ENCODE measurements at regions of chrX and their contacts with region 1.

Region 1: DNA sequence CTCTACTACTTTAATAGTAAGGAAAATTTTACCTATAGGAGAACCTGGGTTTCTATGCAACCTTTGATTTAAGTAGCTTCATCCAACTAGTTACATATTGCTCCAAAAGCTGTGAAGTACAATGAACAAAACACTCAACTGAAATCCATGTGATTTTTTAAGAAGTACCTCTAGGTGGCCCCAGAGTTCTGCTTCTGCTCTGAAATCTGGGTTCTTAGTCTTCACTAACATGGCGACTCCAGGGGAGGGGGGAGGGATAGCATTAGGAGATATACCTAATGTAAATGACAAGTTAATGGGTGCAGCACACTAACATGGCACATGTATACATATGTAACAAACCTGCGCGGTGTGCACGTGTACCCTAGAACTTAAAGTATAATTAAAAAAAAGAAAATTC is 73.4 kb upstream of the MAGEB2 start:
- DNase-seq: no peak
- H3K4me3 ChIP-seq: no peak overlapping the region
- H3K27me3 ChIP-seq: no peaks in the 10 kb centered on the region
- CTCF ChIP-seq: peak; percentile 34

Region 2: GRCh38 chrX:30153881-30154260 is 11.9 kb after region 1 on chrX:
- CTCF ChIA-PET with region 1: no interaction called
- POLR2A ChIA-PET with region 1: no interaction called
- DNase-seq: peak; percentile 23
- H3K4me3 ChIP-seq: no peak overlapping the region
- H3K27me3 ChIP-seq: no peaks in the 10 kb centered on the region
- CTCF ChIP-seq: no peak

Region 3: GRCh38 chrX:30259927-30260326 is 118.0 kb after region 1 on chrX:
- CTCF ChIA-PET with region 1: no interaction called
- POLR2A ChIA-PET with region 1: no interaction called
- DNase-seq: no peak
- H3K4me3 ChIP-seq: no peak overlapping the region
- H3K27me3 ChIP-seq: no peaks in the 10 kb centered on the region
- CTCF ChIP-seq: no peak

Region 4: GRCh38 chrX:30275498-30275897 is 133.5 kb after region 1 on chrX:
- CTCF ChIA-PET with region 1: no interaction called
- POLR2A ChIA-PET with region 1: interaction called, 21 read pairs
- DNase-seq: no peak
- H3K4me3 ChIP-seq: no peak overlapping the region
- H3K27me3 ChIP-seq: no peaks in the 10 kb centered on the region
- CTCF ChIP-seq: peak; percentile 32

Measured in BJ (cell line).